ENCODE measurements at regions of chr15 and their contacts with region 1.

Region 1: GRCh38 chr15:29103824-29104565 is 165.6 kb downstream of the NSMCE3 start:
- DNase-seq: peak; percentile 13
- H3K4me3 ChIP-seq: peak overlapping the region; percentile 42
- H3K27me3 ChIP-seq: no peaks in the 10 kb centered on the region
- CTCF ChIP-seq: peak; percentile 78

Region 2: DNA sequence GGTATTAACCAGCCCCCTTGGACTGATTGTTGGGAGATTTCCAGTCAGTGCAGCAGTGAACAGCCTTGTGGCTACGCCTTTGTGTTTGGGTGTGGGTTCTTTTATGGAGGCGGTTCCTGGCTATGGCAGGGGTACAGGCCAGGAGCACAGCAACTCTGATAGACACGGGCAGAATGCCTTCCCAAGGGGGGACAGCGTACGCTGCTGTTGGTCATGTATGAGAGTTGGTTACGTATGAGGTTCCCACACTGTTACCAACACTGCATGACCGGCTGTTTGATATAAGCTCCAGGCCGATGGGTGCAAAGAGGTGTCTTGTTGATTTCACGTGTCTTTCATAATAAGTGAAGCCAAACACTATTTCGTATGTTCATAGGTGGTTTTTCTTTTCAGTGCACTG is 22.2 kb before region 1 on chr15:
- CTCF ChIA-PET with region 1: interaction called, 78 read pairs
- POLR2A ChIA-PET with region 1: no interaction called
- DNase-seq: no peak
- H3K4me3 ChIP-seq: no peak overlapping the region
- H3K27me3 ChIP-seq: no peaks in the 10 kb centered on the region
- CTCF ChIP-seq: no peak

Region 3: GRCh38 chr15:29090617-29091466 is 13.2 kb before region 1 on chr15:
- CTCF ChIA-PET with region 1: interaction called, 78 read pairs
- POLR2A ChIA-PET with region 1: no interaction called
- DNase-seq: no peak
- H3K4me3 ChIP-seq: no peak overlapping the region
- H3K27me3 ChIP-seq: no peaks in the 10 kb centered on the region
- CTCF ChIP-seq: peak; percentile 80

Measured in BJ (cell line).